ENCODE measurements at regions of chr6 and their contacts with region 1.

Region 1: GRCh38 chr6:32868257-32868788 is 14.3 kb downstream of the PSMB9 start:
- DNase-seq: peak; percentile 95
- ATAC-seq: peak; percentile 78
- H3K4me3 Mint-ChIP-seq: no peak overlapping the region
- H3K27ac Mint-ChIP-seq: no peak overlapping the region
- H3K4me1 Mint-ChIP-seq: peaks cover 32% of the 10 kb centered on the region
- H3K27me3 Mint-ChIP-seq: no peaks in the 10 kb centered on the region
- CTCF ChIP-seq: peak; percentile 92

Region 2: GRCh38 chr6:32558426-32559057 is 309.8 kb before region 1 on chr6:
- CTCF ChIA-PET with region 1: no interaction called
- POLR2A ChIA-PET with region 1: no interaction called
- intact Hi-C with region 1: no loop called
- DNase-seq: no peak
- ATAC-seq: no peak
- H3K4me3 Mint-ChIP-seq: no peak overlapping the region
- H3K27ac Mint-ChIP-seq: no peak overlapping the region
- H3K4me1 Mint-ChIP-seq: no peaks in the 10 kb centered on the region
- H3K27me3 Mint-ChIP-seq: peaks cover 14% of the 10 kb centered on the region
- CTCF ChIP-seq: no peak

Region 3: DNA sequence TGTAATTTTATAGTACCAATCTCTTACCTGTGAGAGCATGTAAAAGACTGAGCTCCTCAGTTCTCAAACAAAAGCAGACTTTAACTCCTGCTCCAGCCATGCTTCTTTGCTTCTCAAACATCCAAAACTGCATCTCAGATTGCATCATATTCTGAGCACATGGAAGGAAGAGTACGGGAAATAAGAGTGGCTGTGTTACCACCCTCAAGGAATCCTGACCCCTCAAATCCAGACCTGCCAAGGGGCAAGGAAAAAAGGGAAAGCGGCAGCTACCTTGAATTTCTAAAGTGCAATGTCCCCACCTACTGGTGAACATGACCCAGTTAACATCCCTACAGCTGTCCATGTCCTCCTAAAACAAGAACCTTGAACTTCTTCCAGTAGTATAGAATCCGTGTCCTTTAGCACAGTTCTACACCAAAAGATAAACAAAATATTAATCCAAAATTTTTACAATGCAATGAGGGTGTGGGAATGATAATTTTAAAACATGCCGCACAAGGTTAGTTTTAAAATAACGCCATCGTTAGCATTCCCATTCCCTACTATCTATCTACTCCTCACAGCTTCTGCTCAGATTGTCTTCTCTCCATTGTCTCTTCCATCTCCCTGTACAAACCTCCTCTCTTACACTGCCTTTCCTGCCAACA is 167.8 kb before region 1 on chr6:
- CTCF ChIA-PET with region 1: interaction called, 11 read pairs
- POLR2A ChIA-PET with region 1: no interaction called
- intact Hi-C with region 1: no loop called
- DNase-seq: peak; percentile 22
- ATAC-seq: peak; percentile 42
- H3K4me3 Mint-ChIP-seq: no peak overlapping the region
- H3K27ac Mint-ChIP-seq: no peak overlapping the region
- H3K4me1 Mint-ChIP-seq: no peaks in the 10 kb centered on the region
- H3K27me3 Mint-ChIP-seq: peaks cover 30% of the 10 kb centered on the region
- CTCF ChIP-seq: peak; percentile 89

Region 4: GRCh38 chr6:32814145-32814544 is 54.2 kb before region 1 on chr6:
- CTCF ChIA-PET with region 1: interaction called, 14 read pairs
- POLR2A ChIA-PET with region 1: no interaction called
- intact Hi-C with region 1: no loop called
- DNase-seq: no peak
- ATAC-seq: no peak
- H3K4me3 Mint-ChIP-seq: no peak overlapping the region
- H3K27ac Mint-ChIP-seq: no peak overlapping the region
- H3K4me1 Mint-ChIP-seq: peaks cover 2% of the 10 kb centered on the region
- H3K27me3 Mint-ChIP-seq: no peaks in the 10 kb centered on the region
- CTCF ChIP-seq: no peak

Region 5: GRCh38 chr6:32843979-32844838 is 24.1 kb before region 1 on chr6 and contains the start of gene PSMB8:
- CTCF ChIA-PET with region 1: interaction called, 400 read pairs
- POLR2A ChIA-PET with region 1: interaction called, 79 read pairs
- intact Hi-C with region 1: no loop called
- DNase-seq: peak; percentile 100
- ATAC-seq: peak; percentile 75
- H3K4me3 Mint-ChIP-seq: peak within 1 kb of the TSS; percentile 97
- H3K27ac Mint-ChIP-seq: peak within 1 kb of the TSS; percentile 99
- H3K4me1 Mint-ChIP-seq: peaks cover 63% of the 10 kb centered on the region
- H3K27me3 Mint-ChIP-seq: no peaks in the 10 kb centered on the region
- CTCF ChIP-seq: no peak
- total RNA-seq, gene PSMB8: 370 to 371 TPM

Region 6: DNA sequence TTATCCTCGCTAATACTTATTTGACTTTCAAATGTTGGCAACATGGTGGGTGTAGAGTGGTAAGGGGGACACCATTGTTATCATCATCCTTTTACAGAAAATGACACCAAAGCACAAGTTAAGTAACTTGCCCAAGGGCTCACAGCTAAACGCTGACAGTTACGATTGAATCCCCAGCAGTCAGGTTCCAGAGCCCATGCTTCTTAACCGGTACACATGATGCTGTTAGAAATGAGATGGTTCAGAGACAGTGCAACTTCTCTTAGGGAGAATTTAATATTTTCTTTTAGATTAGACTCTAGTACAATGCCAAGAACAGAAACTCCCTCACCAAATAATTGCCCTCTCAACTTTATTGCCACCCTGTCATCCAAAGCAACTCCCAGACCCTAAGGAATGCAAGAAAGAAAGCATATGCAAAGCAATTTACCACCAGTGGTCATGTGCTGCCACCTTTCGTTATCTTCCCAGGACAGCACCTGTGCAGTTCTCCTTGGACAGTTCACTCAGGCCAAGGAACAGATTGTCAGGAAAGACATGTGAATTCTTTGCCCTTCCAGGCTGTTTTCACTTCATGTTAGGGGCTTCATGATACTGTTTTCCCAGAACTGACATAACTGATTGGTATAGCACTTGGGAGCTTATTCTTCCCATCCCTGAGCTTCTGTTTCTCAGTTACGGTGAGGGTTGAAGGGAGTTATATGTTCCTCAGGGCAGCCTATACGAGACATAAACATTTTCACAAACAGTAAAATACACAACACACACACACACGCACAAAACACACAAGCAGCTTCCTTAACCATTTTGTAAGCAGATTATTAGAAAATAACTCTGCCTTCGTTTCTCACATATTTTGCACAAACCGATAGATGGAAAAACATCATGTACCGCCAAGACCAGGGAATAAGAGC is 79.5 kb after region 1 on chr6:
- CTCF ChIA-PET with region 1: interaction called, 40 read pairs
- POLR2A ChIA-PET with region 1: interaction called, 5 read pairs
- intact Hi-C with region 1: no loop called
- DNase-seq: peak; percentile 62
- ATAC-seq: no peak
- H3K4me3 Mint-ChIP-seq: no peak overlapping the region
- H3K27ac Mint-ChIP-seq: no peak overlapping the region
- H3K4me1 Mint-ChIP-seq: peaks cover 72% of the 10 kb centered on the region
- H3K27me3 Mint-ChIP-seq: no peaks in the 10 kb centered on the region
- CTCF ChIP-seq: peak; percentile 68